ENCODE measurements at regions of chr11 and their contacts with region 1.

Region 1: DNA sequence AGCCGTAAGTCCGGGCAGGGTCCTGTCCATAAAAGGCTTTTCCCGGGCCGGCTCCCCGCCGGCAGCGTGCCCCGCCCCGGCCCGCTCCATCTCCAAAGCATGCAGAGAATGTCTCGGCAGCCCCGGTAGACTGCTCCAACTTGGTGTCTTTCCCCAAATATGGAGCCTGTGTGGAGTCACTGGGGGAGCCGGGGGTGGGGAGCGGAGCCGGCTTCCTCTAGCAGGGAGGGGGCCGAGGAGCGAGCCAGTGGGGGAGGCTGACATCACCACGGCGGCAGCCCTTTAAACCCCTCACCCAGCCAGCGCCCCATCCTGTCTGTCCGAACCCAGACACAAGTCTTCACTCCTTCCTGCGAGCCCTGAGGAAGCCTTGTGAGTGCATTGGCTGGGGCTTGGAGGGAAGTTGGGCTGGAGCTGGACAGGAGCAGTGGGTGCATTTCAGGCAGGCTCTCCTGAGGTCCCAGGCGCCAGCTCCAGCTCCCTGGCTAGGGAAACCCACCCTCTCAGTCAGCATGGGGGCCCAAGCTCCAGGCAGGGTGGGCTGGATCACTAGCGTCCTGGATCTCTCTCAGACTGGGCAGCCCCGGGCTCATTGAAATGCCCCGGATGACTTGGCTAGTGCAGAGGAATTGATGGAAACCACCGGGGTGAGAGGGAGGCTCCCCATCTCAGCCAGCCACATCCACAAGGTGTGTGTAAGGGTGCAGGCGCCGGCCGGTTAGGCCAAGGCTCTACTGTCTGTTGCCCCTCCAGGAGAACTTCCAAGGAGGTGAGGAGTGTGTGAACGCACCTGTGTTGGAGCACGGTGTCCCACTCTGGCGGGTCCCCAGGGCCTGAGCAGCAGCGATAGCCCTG is at the start of gene TAGLN:
- DNase-seq: peak; percentile 94
- ATAC-seq: peak; percentile 75
- H3K4me3 ChIP-seq: peak within 1 kb of the TSS; percentile 49
- H3K27ac ChIP-seq: peak within 1 kb of the TSS; percentile 98
- H3K4me1 ChIP-seq: peaks cover 40% of the 10 kb centered on the region
- H3K27me3 ChIP-seq: no peaks in the 10 kb centered on the region
- CTCF ChIP-seq: no peak
- POLR2A ChIP-seq: peak; percentile 98
- RAD21 ChIP-seq: 0 out of 2 replicates have a peak, but pooled peaks have one; percentile 2
- total RNA-seq, gene TAGLN: 1,558 and 2,558 TPM in 2 replicates

Region 2: GRCh38 chr11:117217141-117218084 is 18.1 kb after region 1 on chr11:
- CTCF ChIA-PET with region 1: interaction called, 4 read pairs
- POLR2A ChIA-PET with region 1: interaction called, 11 read pairs
- dilution Hi-C with region 1: no loop called
- in situ Hi-C with region 1: no loop called
- intact Hi-C with region 1: no loop called
- DNase-seq: peak; percentile 88
- ATAC-seq: peak; percentile 56
- H3K4me3 ChIP-seq: no peak overlapping the region
- H3K27ac ChIP-seq: peak overlapping the region; percentile 100
- H3K4me1 ChIP-seq: peaks cover 40% of the 10 kb centered on the region
- H3K27me3 ChIP-seq: no peaks in the 10 kb centered on the region
- CTCF ChIP-seq: no peak
- POLR2A ChIP-seq: peak; percentile 16; the same call in 1 of the 2 replicates
- RAD21 ChIP-seq: 0 out of 2 replicates have a peak, but pooled peaks have one; percentile 3

Measured in IMR-90 (cell line).